HCT116 (cell line): ENCODE measurements at regions of chr7 and their contacts with region 1.

Region 1: DNA sequence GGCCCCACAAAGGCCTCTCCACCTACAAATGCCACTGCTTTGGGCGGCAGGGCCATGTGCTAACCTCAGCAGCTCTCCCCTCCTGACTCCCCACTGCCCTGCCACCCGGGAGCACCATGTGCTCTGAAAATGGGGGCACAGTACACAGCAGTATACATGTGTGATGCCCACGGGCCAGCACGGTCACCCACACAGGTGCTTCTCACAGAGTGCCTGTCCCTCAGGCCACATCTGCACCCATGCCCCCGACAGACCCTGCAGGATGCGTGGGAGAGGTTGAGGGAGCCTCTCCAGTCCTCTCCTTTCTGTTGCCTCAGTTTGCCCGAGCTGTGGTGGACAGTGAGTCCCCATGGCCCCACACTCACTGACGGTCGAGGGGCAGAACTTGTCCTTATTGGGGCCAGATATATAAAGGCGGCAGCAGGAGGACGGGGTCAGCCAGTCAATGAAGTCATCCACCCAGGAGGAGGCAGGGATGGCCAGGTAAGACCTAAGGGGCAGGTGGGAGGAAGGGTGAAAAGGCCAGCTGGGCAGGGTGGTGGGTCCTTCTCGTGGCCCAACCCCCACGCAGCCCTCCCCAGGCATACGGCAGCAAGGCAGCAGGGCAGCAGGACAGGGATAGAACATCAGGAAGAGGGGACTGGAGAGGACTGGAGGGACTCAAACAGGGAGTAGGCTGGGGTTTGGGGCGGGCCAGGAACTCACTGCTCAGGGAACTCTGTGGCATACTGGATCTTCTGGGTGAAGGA is 19.6 kb downstream of the NPC1L1 start:
- DNase-seq: no peak
- ATAC-seq: no peak
- H3K4me3 ChIP-seq: no peak overlapping the region
- H3K27ac ChIP-seq: no peak overlapping the region
- H3K4me1 ChIP-seq: no peaks in the 10 kb centered on the region
- H3K27me3 ChIP-seq: no peaks in the 10 kb centered on the region
- CTCF ChIP-seq: no peak
- POLR2A ChIP-seq: no peak
- RAD21 ChIP-seq: no peak

Region 2: GRCh38 chr7:43491984-43492383 is 1029.5 kb before region 1 on chr7:
- CTCF ChIA-PET with region 1: no interaction called
- POLR2A ChIA-PET with region 1: no interaction called
- RAD21 ChIA-PET with region 1: no interaction called
- intact Hi-C with region 1: no loop called
- DNase-seq: no peak
- ATAC-seq: no peak
- H3K4me3 ChIP-seq: no peak overlapping the region
- H3K27ac ChIP-seq: no peak overlapping the region
- H3K4me1 ChIP-seq: no peaks in the 10 kb centered on the region; a peak in 1 of 4 replicates
- H3K27me3 ChIP-seq: no peaks in the 10 kb centered on the region
- CTCF ChIP-seq: no peak
- POLR2A ChIP-seq: no peak
- RAD21 ChIP-seq: no peak

Region 3: DNA sequence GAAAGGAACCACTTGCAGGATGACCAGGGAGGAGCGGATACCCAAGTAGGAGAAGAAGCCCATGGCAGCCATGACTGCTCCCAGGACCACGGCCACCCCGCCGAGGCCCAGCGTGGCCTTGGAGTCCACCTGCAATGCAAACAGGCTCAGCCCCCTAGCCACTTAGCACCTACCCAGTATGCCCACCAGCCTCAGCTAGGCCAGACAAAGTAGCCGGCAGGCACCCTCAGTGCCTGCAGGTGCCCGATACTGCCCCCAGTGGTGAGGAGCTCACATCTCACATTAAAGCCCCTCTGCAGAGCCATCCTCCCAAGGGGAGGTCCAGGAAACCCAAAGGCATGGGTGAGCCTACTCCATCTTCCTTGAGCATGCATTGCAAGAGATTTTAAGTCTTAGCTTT is 13.0 kb after region 1 on chr7:
- CTCF ChIA-PET with region 1: interaction called, 14 read pairs
- POLR2A ChIA-PET with region 1: no interaction called
- RAD21 ChIA-PET with region 1: no interaction called
- intact Hi-C with region 1: no loop called
- DNase-seq: peak; percentile 43
- ATAC-seq: peak; percentile 97
- H3K4me3 ChIP-seq: no peak overlapping the region
- H3K27ac ChIP-seq: no peak overlapping the region
- H3K4me1 ChIP-seq: peaks cover 0 to 12% of the 10 kb centered on the region in 2 experiments; a peak in 2 of 4 replicates
- H3K27me3 ChIP-seq: no peaks in the 10 kb centered on the region
- CTCF ChIP-seq: peak; percentile 21 to 92 (median 86); a peak in 5 of 6 replicates
- POLR2A ChIP-seq: no peak
- RAD21 ChIP-seq: peak; percentile 44